AG04450 (cell line): ENCODE measurements at regions of chr1 and their contacts with region 1.

Region 1: GRCh38 chr1:44059956-44060355 is 28.7 kb upstream of the SLC6A9 start:
- DNase-seq: no peak
- H3K4me3 ChIP-seq: no peak overlapping the region
- H3K27ac ChIP-seq: no peak overlapping the region
- H3K27me3 ChIP-seq: no peaks in the 10 kb centered on the region
- CTCF ChIP-seq: no peak

Region 2: DNA sequence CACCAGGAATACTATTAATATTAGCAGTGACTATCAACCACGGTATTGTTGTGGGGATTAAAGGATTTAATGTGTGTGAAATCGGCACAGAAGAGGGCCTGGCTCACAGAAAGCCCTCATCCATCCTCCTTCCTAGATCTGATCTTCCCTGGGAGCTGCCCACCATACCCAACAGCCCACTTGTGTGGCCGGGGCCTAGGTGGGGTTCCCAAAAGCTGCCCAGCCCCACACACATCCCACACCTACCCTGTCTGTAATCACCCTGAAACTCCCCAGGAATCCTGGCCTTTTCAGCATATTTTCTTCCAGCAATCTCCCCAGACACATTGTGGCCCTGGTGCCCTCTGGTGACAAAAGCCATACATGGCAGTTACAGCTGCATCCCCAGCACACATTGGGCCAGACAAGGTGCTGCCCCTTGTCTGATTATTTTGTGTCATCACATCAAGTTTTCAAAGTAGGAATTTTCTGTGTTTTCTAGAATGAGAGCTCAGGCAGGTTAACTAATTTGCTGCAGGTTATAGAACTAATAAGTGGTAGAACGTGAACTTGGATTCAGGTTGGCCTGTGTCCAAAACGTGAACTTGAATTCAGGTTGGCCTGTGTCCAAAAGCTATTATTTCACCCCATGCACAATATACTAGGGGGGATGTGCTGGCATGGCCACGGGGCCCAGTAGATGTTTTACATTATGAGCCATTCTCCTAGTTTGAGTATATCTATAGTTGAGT is 23.4 kb before region 1 on chr1:
- CTCF ChIA-PET with region 1: no interaction called
- POLR2A ChIA-PET with region 1: interaction called, 10 read pairs
- DNase-seq: no peak
- H3K4me3 ChIP-seq: no peak overlapping the region
- H3K27ac ChIP-seq: peak overlapping the region; percentile 11
- H3K27me3 ChIP-seq: no peaks in the 10 kb centered on the region
- CTCF ChIP-seq: peak; percentile 63

Region 3: GRCh38 chr1:44158871-44159270 is 98.9 kb after region 1 on chr1:
- CTCF ChIA-PET with region 1: no interaction called
- POLR2A ChIA-PET with region 1: no interaction called
- DNase-seq: no peak
- H3K4me3 ChIP-seq: no peak overlapping the region
- H3K27ac ChIP-seq: no peak overlapping the region
- H3K27me3 ChIP-seq: no peaks in the 10 kb centered on the region
- CTCF ChIP-seq: no peak

Region 4: GRCh38 chr1:44417351-44418021 is 357.5 kb after region 1 on chr1:
- CTCF ChIA-PET with region 1: no interaction called
- POLR2A ChIA-PET with region 1: no interaction called
- DNase-seq: no peak
- H3K4me3 ChIP-seq: no peak overlapping the region
- H3K27ac ChIP-seq: no peak overlapping the region
- H3K27me3 ChIP-seq: peaks cover 87% of the 10 kb centered on the region
- CTCF ChIP-seq: no peak